ENCODE measurements at regions of chr12 and their contacts with region 1.

Region 1: GRCh38 chr12:107131832-107132616 is 38.7 kb upstream of the CRY1 start:
- DNase-seq: peak; percentile 55

Region 2: DNA sequence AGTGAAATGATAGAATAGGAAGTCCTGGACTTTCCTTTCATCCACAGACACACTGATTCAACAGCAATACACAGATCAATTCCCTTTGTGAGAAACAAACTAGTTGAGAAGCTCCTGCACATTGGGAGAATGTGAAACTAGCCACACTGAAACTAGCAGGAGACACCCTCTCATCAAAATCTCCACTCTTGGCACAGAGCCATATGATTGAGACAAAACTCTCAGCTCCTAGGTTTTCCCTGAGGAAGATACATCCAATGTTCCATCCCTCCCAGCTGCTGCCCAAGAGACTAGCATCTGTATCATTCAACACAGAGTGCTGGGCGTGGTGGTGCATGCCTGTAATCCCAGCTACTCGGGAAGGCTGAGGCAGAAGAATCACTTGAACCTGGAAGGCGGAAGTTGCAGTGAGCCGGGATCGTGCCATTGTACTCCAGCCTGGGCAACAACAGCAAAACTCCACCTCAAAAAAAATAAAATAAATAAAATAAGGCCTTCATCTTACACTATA is 93.3 kb before region 1 on chr12:
- in situ Hi-C with region 1: no loop called
- DNase-seq: no peak

Region 3: DNA sequence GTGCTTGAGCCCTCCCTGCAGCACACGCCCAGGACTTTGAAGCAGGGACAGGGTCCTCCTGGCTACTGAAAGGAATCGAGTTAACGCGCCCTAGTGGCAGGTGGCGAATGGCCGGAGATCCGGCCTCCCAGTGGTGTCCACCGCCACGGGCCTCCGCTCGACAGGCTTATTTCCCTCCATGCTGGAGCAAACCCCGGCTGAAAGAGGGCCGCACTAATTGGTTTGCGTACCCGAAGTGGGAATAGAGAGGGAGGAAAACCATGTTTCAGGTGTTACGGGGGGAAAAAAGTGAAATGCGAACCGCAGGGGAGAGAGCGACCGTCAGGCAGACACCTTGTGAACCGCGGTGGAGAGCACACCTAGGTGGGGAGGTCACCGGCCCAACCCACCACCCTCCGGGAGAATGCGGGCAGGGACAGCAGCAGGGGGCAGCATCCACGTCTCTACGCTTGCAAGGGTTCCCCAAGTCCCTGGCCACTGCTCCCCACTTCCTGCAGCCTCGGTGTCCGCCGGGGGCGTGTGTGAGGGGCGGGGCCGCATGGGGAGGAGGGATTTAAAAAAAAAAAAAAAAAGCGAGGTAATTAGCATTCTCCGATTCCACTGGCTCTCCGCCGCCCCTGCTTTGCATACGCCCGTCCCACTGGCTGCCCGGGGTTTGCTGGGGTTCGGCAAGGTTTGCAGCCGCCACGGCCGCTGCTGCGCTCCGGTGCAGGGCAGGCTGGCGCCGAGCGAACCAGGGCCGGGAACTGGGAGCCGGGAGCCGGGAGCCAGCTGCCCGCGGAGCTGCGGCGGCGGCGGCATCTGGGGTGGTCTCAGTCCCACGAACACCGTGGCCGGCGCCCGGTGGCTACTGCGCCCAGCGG is 186.0 kb after region 1 on chr12:
- in situ Hi-C with region 1: loop called (anchors 25 kb)
- DNase-seq: peak; percentile 87

Region 4: DNA sequence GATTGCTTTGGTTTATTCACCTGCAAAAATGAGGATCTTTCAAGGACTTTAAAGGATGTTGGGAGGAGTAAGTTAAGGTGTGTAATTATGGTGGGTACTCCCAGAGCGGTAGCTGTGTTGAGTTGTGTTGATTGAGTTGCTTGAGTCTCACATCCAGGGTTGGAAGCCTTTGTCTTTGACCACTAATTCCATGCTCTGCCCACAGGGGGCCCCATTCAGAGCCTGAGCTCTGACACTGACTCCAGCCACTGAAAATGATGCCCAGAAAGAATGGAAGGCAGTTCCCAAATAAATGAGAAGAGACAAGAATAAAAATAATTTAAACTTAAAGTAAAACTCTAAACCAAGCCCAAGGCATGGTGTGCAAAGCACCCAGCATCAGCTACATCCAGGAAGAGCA is 316.2 kb after region 1 on chr12:
- in situ Hi-C with region 1: no loop called
- DNase-seq: no peak

Region 5: DNA sequence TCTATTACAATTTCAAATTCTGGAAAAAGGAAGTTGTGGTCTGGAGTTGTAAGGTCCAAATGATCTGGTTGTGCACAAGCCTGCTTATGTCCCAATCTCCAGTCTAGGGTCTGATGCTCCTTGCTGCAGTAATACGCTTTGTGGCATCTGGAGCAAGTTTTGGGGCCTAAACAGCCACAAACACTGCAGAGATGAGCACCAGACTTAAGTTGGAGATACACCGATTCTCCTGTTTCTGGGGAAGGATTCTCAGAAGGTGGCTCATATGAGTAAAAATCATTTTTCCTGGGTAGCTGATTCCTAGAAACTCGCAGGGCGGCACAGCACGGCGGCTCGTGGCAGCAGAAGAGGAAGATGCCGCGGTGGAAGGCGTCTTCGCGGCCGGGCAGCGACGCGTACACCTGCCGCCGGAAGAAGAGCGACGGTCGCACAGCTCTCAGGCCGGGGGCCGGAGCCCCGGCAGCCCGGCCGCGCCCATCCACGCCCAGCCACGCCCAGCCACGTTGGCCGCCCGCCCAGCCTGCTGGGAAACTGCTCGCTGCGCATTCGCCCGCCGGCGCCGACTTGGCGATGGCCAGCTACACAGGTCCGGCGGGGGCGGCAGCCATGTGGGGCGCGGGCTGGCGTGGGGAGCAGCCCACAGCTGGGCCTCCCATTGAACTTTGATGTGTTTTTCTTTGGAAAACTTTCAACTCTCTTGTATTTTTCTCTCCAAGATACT is 771.5 kb after region 1 on chr12:
- in situ Hi-C with region 1: no loop called
- DNase-seq: peak; percentile 78

Measured in Caki2 (cell line).